ENCODE measurements at regions of chr5 and their contacts with region 1.

Region 1: GRCh38 chr5:126656396-126657007 is 55.8 kb downstream of the PHAX start:
- DNase-seq: no peak
- ATAC-seq: no peak

Region 2: GRCh38 chr5:126780165-126780827 is 123.8 kb after region 1 on chr5:
- intact Hi-C with region 1: loop called (anchors 10 kb)
- DNase-seq: no peak
- ATAC-seq: no peak

Measured in sciatic nerve (tissue), 2 donors.